CD14-positive monocyte (primary cell): ENCODE measurements at regions of chr1 and their contacts with region 1.

Region 1: DNA sequence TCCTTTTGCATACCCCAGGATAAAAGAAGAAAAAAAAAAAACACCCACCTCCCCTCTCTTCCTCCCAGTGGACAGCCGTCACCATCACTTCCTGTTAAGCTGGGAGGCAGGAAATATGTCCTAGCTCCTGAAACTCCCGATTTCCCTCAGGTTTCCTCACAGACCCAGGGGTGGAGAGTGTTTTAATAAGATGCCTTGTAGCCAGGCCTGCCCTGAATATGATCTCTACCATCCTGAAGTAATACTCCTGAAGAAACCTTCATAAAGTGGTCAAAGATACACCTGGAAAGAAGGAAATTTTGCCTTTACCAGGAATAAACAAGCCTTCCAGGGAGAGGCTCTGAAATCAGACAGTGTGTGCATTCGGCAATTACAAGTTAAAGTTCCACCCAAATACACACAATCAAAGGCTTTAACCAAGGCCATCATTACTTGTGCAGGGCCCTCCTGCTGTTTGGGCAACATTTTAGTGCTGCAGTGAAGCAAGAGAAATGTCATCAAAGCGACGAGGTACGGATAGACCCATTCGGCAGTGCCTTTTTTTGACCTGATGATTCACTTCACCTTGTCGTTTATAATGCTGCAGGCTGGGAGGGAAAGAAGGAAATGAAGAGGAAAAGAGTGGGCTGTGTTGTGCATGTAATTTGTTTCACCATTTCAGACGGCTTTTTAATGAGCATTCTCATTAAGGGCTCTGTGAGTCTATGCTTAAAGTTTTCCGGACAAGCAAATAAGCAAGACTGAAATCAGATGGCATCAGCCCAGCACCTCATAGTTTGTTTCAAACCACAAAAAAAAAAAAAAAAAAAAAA is 41.0 kb upstream of the RASAL2 start:
- DNase-seq: no peak
- H3K4me3 ChIP-seq: no peak overlapping the region
- H3K4me3 Mint-ChIP-seq: no peak overlapping the region
- H3K27ac ChIP-seq: no peak overlapping the region
- H3K27ac Mint-ChIP-seq: no peak overlapping the region
- H3K4me1 ChIP-seq: peaks cover 21 to 27% of the 10 kb centered on the region in 2 donors
- H3K4me1 Mint-ChIP-seq: peaks cover 26% of the 10 kb centered on the region
- H3K27me3 ChIP-seq: no peaks in the 10 kb centered on the region
- H3K27me3 Mint-ChIP-seq: peaks cover 0 to 3% (median 3%) of the 10 kb centered on the region in 3 donors
- CTCF ChIP-seq: no peak

Region 2: GRCh38 chr1:178109348-178110143 is 56.7 kb after region 1 on chr1:
- intact Hi-C with region 1: loop called in 1 of 2 experiments (anchors 2 kb)
- DNase-seq: no peak
- H3K4me3 ChIP-seq: no peak overlapping the region
- H3K4me3 Mint-ChIP-seq: no peak overlapping the region
- H3K27ac ChIP-seq: no peak overlapping the region
- H3K27ac Mint-ChIP-seq: no peak overlapping the region
- H3K4me1 ChIP-seq: no peaks in the 10 kb centered on the region
- H3K4me1 Mint-ChIP-seq: no peaks in the 10 kb centered on the region
- H3K27me3 ChIP-seq: no peaks in the 10 kb centered on the region
- H3K27me3 Mint-ChIP-seq: no peaks in the 10 kb centered on the region
- CTCF ChIP-seq: no peak